Posterior cingulate gyrus (tissue), 11 donors: ENCODE measurements at regions of chr4 and their contacts with region 1.

Region 1: GRCh38 chr4:78951862-78952472 is 12.7 kb upstream of the PAQR3 start:
- DNase-seq: peak in 1 of 10 donors; percentile 29

Region 2: GRCh38 chr4:78938868-78939666 is 12.9 kb before region 1 on chr4 and contains the start of gene PAQR3:
- intact Hi-C with region 1: loop called (anchors 1 kb)
- DNase-seq: peak; percentile 67 to 97 (median 80)

Region 3: DNA sequence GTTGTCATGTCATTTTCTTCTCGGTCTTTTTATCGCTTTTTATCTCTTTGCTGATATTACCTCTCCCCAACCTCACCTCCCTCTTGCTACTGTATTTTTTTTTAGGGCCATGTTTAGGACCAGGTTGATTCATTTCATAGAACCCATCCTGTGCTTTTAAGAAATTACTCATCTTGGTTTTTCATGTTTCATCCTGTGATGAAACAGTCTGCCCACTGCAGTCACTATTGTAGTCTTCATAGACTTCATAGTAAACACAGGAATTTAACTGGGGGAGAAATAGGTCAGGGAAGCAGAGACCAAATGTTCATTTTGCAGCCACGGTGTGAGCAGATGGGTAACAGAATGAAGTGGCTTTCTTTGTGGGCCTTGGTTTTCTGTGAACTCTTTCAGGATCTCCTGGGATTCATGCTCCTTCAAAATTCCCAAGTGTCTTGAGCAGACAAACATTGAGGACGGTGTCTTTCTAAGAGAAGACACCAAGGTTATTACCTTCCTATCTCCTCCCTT is 212.1 kb after region 1 on chr4:
- intact Hi-C with region 1: no loop called
- DNase-seq: no peak

Region 4: GRCh38 chr4:79526641-79527565 is 574.9 kb after region 1 on chr4:
- intact Hi-C with region 1: no loop called
- DNase-seq: no peak

Region 5: DNA sequence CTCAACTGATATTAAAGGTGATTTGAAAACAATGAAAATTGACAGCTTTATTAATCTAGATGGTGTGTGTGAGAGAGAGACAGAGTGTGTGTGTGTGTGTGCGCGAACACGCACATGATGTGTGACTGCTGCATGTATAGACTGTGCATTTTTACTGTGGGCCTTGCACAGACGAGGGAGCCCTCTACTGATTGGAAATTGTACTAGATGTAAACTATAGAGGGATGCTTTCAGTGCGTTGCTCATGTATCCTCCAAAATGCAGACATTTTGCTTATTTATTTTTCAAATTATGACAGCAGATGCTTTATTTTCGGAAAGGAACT is 624.4 kb after region 1 on chr4:
- intact Hi-C with region 1: loop called (anchors 2 kb)
- DNase-seq: peak in 2 of 10 donors; percentile 16 to 26